Spleen (tissue), 13 donors: ENCODE measurements at regions of chrX and their contacts with region 1.

Region 1: GRCh38 chrX:40877887-40878286 is 142.5 kb upstream of the MED14 start:
- DNase-seq: no peak
- H3K4me3 ChIP-seq: no peak overlapping the region
- H3K27ac ChIP-seq: no peak overlapping the region
- H3K4me1 ChIP-seq: peaks cover 0 to 6% (median 0%) of the 10 kb centered on the region in 6 donors
- H3K27me3 ChIP-seq: peaks cover 0 to 8% (median 0%) of the 10 kb centered on the region in 7 donors
- CTCF ChIP-seq: peak in 10 of 11 experiments; percentile 20 to 53 (median 44)
- POLR2A ChIP-seq: no peak

Region 2: DNA sequence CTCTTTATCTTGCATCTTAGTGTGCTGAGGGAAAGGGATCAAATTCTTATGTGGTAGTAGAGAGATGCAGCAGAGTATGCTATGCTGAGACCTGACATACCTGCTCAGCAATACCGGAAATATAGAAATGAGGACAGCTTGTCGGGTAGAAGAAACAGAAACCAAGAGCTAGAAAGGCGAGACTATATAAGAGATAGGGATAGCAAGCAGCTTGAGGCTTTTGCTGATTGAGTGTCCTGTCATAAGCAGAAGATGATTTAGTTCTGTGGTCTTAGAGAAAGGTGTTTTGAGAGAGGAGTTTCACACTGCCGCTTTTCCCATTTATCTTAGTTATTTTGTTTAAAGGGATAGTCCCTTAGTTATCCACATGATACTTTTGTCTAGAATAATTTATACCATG is 239.1 kb after region 1 on chrX:
- intact Hi-C with region 1: loop called (anchors 5 kb)
- DNase-seq: no peak
- H3K4me3 ChIP-seq: no peak overlapping the region
- H3K27ac ChIP-seq: peak overlapping the region in 5 of 8 donors; percentile 27 to 46 (median 32)
- H3K4me1 ChIP-seq: peaks cover 30 to 99% (median 77%) of the 10 kb centered on the region in 6 donors
- H3K27me3 ChIP-seq: no peaks in the 10 kb centered on the region
- CTCF ChIP-seq: no peak
- POLR2A ChIP-seq: no peak

Region 3: DNA sequence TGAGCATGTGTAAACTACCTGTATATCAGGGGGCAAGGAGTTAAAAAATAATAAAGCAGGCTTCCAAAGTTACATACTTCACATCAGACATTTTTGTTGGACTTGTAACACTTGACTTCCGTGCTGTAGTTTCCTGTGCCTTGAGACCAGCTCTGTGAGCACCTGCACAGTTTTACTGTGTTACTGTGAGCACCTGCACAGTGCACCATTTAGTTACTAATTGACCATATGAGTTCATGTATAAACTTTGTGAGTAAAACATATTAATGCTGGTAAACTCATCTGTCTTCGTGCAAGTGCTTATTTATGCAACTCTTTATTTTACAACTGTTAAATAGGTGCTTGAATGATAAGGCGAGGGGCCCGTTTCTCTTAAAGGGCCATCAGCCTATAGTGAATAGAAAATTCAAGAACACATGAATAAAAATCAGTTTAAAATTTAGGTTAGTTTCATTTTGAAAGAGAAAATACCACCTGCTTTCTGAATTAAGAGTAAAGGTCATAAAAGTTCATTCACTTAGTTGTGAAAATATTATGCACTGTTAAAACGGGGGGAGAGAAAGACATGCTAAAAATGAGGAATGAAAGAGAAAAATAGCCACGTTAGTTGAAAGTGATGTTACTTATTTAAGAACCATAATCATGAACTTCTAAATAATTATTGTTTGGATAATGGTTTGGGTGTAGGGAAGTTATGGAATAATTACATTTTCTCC is 249.7 kb after region 1 on chrX:
- intact Hi-C with region 1: no loop called
- DNase-seq: no peak
- H3K4me3 ChIP-seq: no peak overlapping the region
- H3K27ac ChIP-seq: no peak overlapping the region
- H3K4me1 ChIP-seq: peaks cover 9 to 34% (median 26%) of the 10 kb centered on the region in 6 donors
- H3K27me3 ChIP-seq: no peaks in the 10 kb centered on the region
- CTCF ChIP-seq: no peak
- POLR2A ChIP-seq: no peak